Thyroid gland (tissue), 4 donors: ENCODE measurements at regions of chr5 and their contacts with region 1.

Region 1: GRCh38 chr5:174793684-174794328 is 69.4 kb downstream of the MSX2 start:
- DNase-seq: peak; percentile 31 to 52
- H3K4me3 ChIP-seq: no peak overlapping the region
- H3K27ac ChIP-seq: no peak overlapping the region
- H3K4me1 ChIP-seq: no peaks in the 10 kb centered on the region
- H3K27me3 ChIP-seq: no peaks in the 10 kb centered on the region
- CTCF ChIP-seq: peak; percentile 51 to 91 (median 61)
- POLR2A ChIP-seq: no peak

Region 2: GRCh38 chr5:174418928-174419796 is 374.6 kb before region 1 on chr5:
- intact Hi-C with region 1: loop called (anchors 5 kb)
- DNase-seq: peak; percentile 87 to 92
- H3K4me3 ChIP-seq: no peak overlapping the region
- H3K27ac ChIP-seq: no peak overlapping the region
- H3K4me1 ChIP-seq: no peaks in the 10 kb centered on the region
- H3K27me3 ChIP-seq: no peaks in the 10 kb centered on the region
- CTCF ChIP-seq: peak; percentile 56 to 89 (median 80)
- POLR2A ChIP-seq: no peak